Tibial artery (tissue), 4 donors: ENCODE measurements at regions of chr17 and their contacts with region 1.

Region 1: GRCh38 chr17:7589204-7589868 is 558 bp downstream of the SOX15 start:
- DNase-seq: peak; percentile 90
- H3K4me3 ChIP-seq: peak overlapping the region; percentile 48 to 62
- H3K27ac ChIP-seq: peak overlapping the region; percentile 57 to 71
- H3K4me1 ChIP-seq: peaks cover 0 to 33% (median 23%) of the 10 kb centered on the region in 4 donors
- H3K27me3 ChIP-seq: no peaks in the 10 kb centered on the region
- CTCF ChIP-seq: peak; percentile 88

Region 2: GRCh38 chr17:7523033-7523432 is 66.3 kb before region 1 on chr17:
- intact Hi-C with region 1: loop called (anchors 2 kb)
- DNase-seq: no peak
- H3K4me3 ChIP-seq: no peak overlapping the region
- H3K27ac ChIP-seq: no peak overlapping the region
- H3K4me1 ChIP-seq: no peaks in the 10 kb centered on the region
- H3K27me3 ChIP-seq: no peaks in the 10 kb centered on the region
- CTCF ChIP-seq: peak; percentile 34 to 38

Region 3: DNA sequence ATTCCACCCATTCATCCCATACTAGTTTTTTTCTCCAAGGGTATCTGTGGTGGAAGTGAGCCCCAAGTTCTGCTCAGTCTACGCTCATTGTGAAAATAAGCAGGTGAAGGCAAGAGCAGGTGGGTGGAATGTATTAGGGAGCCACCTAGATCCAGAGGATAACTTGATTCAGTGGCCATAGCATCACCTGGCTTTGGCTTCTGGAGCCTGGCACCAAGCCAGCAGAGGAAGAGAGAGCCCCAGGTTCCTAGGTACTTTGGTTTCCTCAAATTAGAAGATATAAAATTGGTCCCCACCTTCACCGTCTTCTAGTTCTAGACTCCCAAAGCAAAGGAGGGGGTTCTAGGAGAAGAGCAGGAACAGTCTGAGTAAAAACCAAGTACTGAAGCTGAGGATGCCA is 21.3 kb after region 1 on chr17:
- intact Hi-C with region 1: loop called (anchors 1 kb)
- DNase-seq: no peak
- H3K4me3 ChIP-seq: no peak overlapping the region
- H3K27ac ChIP-seq: no peak overlapping the region
- H3K4me1 ChIP-seq: peaks cover 0 to 43% (median 28%) of the 10 kb centered on the region in 4 donors
- H3K27me3 ChIP-seq: no peaks in the 10 kb centered on the region
- CTCF ChIP-seq: no peak